Activated T-helper 1 cell treated with anti-CD3 and anti-CD28 coated beads, Interleukin-12 subunit alpha, Interleukin-12 subunit beta, Interleukin-2, Interleukin-4 antibody, amounts not matched to agents 30 ng/mL and 10 ng/mL and 1 ng/mL, durations not matched to agents 14 hours and 24 hours and 36 hours (primary cell): ENCODE measurements at regions of chr9 and their contacts with region 1.

Region 1: GRCh38 chr9:99868845-99869244 is 37.6 kb upstream of the STX17 start:
- DNase-seq: no peak
- H3K4me3 Mint-ChIP-seq: no peak overlapping the region
- H3K27ac Mint-ChIP-seq: peak overlapping the region; percentile 55
- H3K4me1 Mint-ChIP-seq: peaks cover 45% of the 10 kb centered on the region
- H3K27me3 Mint-ChIP-seq: no peaks in the 10 kb centered on the region

Region 2: DNA sequence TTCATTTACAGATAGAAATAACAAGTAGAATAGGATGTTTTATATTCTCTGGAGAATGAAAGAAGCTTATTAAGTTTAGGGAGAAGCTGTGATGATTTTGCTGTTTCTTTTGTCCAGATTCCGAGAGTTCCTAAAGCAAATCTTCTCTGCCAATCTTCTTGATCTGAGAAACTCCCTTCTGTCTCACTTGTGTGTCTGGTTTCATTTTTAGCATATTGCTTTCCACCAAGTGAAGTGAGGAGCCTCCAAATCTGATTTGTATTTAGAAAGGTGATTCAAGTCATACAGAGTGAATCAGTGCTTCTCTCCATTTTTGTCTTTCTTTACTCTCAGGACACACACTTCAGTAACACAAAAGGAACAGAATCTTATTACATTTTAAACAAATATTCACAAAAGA is 86.0 kb after region 1 on chr9:
- intact Hi-C with region 1: loop called (anchors 5 kb)
- DNase-seq: no peak
- H3K4me3 Mint-ChIP-seq: no peak overlapping the region
- H3K27ac Mint-ChIP-seq: peak overlapping the region; percentile 8
- H3K4me1 Mint-ChIP-seq: peaks cover 14% of the 10 kb centered on the region
- H3K27me3 Mint-ChIP-seq: no peaks in the 10 kb centered on the region